ENCODE measurements at regions of chr2 and their contacts with region 1.

Region 1: DNA sequence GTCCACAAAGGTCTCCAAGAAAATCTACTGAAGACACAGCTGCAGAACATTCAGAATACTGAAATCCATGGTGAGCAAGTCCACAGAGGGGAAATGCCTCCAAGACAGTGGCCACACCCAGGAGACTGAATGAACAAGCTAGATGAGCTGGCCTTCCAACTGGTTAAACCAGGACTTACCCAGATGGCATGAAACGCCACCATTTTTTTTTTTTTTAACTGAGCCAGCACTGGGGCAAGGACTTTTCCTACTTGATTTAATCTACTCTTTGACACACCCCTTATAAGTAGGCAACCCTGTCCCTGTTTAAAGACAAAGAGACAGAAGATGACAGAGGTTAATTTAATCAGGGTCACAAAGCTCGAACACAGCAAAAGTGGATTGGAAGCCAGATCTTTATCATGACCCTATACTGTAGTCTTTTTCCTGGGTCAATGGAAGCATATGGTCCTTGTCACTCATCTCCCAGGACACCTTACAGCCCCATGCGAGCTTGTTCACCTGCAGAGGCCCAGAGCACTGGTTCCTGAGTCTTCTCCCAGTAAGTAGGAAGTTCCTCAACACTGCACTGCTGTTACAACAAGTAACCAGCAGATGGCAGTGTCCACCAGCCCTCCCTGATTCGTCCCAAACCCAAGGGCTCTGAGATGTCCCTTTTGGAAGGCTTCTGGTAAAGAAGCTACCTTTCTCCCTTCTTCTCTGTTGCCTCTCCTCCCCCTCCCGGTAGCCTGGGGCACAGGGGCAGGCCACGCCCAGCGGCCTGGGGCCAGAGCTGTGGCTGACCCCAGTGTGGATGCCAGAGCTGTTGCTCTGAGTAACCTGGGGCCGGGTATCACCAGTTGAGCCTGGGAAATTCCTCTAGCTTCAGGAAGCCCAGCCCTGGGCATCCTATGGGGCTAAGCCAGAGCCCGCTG is 5.6 kb upstream of the GDF7 start:
- DNase-seq: peak; percentile 78
- H3K4me3 Mint-ChIP-seq: no peak overlapping the region
- H3K27ac Mint-ChIP-seq: no peak overlapping the region
- H3K4me1 Mint-ChIP-seq: peaks cover 10% of the 10 kb centered on the region
- H3K27me3 Mint-ChIP-seq: peaks cover 52% of the 10 kb centered on the region

Region 2: DNA sequence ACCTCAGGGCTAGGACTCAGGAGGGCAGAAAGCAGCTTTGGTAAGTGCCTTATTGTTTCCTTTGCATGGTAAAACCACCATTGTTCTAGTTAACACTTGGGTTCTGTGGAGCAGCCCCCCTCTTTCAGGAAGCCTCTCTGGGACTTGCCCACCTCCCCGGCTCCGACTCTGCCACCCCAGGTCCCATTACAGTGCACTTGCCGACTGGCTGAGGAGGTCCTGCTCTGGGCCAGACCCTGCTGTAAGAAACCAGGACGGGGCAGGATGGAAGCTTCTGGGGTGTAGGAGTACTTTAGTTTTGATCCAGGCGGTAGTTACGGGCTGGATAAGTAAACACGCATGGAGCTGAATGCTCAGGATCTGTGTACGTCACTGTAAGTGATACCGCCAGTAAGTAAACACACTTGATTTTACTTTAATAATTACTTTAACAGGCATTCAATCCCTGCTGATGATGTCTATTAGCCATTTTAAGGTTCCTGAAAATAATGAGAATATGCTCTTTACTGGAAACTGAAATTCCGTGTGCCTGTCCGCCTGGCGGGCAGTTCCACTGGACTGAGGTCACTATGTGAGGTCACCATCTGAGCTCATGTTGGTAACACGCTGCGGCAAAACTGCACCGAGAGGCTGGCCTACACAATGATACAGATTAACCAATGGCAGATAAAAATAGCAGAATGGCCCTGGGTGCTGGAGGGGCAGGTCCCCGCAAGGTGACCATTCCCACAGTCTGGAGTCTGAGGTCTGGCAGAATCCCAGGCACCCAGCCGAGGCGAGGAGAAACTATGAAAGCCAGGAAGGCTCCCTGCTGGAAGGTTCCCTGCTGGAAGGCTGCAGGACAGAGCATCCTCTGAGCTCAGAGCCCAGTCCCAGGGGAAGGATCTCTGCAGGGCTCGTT is 35.6 kb before region 1 on chr2:
- CTCF ChIA-PET with region 1: no interaction called
- POLR2A ChIA-PET with region 1: no interaction called
- intact Hi-C with region 1: no loop called
- DNase-seq: no peak
- H3K4me3 Mint-ChIP-seq: no peak overlapping the region
- H3K27ac Mint-ChIP-seq: no peak overlapping the region
- H3K4me1 Mint-ChIP-seq: no peaks in the 10 kb centered on the region
- H3K27me3 Mint-ChIP-seq: no peaks in the 10 kb centered on the region

Region 3: DNA sequence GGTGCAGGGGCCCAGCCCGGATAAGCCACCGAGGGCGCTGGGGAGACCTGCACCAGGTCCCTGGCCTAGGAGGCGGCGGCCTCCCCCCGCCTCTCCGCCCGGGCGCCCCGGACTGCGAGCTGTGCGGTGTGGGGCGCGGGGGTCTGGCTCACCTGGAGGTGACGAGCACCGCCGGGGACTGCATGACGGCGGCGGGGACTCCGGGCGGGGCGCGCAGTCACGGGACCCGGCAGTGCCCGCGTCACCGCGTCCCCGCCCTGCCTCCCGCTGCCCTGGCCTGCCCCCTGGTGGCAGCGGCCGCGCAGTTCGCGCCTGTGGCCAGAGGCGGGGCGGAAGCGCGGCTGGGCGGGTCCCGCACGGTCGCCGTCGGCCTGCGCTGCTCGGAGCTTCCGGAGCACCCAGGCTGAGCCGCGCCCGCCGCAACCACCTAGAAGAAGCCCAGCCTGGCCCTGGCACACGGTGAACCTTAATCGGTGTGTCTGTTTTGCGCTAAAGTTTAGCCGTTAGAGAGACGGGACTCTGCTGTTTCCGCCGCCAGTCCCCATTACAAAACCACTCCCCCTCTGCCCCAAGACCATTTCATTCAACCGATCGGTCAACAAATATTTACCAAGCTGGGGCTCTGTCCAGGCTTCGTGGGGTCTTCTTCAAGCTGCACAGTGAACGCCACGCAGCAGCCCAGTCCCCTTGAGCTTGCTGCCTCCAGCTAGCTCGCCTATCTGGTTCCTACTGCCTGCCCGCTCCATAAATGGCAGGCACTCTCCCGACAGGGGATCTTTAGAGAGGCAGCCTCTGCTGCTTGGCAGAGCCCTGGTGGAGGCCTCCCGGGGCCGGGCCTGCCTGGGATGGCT is 10.2 kb before region 1 on chr2 and contains the start of gene HS1BP3:
- CTCF ChIA-PET with region 1: interaction called, 58 read pairs
- POLR2A ChIA-PET with region 1: no interaction called
- intact Hi-C with region 1: no loop called
- DNase-seq: peak; percentile 89
- H3K4me3 Mint-ChIP-seq: peak within 1 kb of the TSS; percentile 83
- H3K27ac Mint-ChIP-seq: peak within 1 kb of the TSS; percentile 79
- H3K4me1 Mint-ChIP-seq: peaks cover 24% of the 10 kb centered on the region
- H3K27me3 Mint-ChIP-seq: no peaks in the 10 kb centered on the region
- total RNA-seq, gene HS1BP3: 10.1 to 10.4 TPM

Region 4: DNA sequence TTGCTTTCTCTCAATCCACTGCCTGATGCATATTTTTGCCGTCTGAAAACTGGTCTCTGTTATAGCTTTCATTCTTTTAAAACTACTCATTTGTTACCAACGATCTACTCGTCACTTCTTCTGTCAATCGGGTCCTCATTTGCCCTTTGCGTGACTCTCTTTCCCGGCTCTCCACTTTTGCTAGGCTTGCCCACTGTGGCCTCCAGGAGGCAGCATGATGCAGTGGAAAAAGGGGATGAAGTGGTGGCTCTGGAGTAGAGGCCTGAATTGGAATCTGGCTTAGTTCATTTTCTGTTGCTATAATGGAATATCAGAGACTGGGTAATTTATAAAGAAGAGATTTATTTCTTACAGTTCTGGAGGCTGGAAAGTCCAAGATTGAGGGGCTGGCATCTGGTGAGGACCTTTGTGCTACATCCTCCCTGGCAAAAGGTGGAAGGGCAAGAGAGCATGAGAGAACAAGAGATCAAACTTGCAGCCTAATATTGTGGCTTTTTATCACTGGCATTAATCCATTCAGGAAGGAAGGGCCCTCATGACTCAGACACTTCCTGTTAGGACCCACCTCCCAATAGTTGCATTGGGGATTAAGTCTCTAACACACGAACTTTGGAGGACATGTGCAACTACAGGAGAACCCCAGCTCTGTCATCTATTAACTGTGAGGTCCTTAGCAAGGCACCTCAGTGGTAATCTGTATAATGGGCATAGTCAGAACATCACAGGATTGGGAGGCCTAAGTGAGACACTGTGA is 21.0 kb after region 1 on chr2:
- CTCF ChIA-PET with region 1: interaction called, 47 read pairs
- POLR2A ChIA-PET with region 1: no interaction called
- intact Hi-C with region 1: no loop called
- DNase-seq: no peak
- H3K4me3 Mint-ChIP-seq: no peak overlapping the region
- H3K27ac Mint-ChIP-seq: no peak overlapping the region
- H3K4me1 Mint-ChIP-seq: peaks cover 11% of the 10 kb centered on the region
- H3K27me3 Mint-ChIP-seq: no peaks in the 10 kb centered on the region

Region 5: GRCh38 chr2:20781656-20782265 is 120.4 kb after region 1 on chr2:
- CTCF ChIA-PET with region 1: interaction called, 18 read pairs
- POLR2A ChIA-PET with region 1: no interaction called
- intact Hi-C with region 1: no loop called
- DNase-seq: peak; percentile 20
- H3K4me3 Mint-ChIP-seq: no peak overlapping the region
- H3K27ac Mint-ChIP-seq: no peak overlapping the region
- H3K4me1 Mint-ChIP-seq: no peaks in the 10 kb centered on the region
- H3K27me3 Mint-ChIP-seq: no peaks in the 10 kb centered on the region

Region 6: GRCh38 chr2:20916604-20917286 is 255.4 kb after region 1 on chr2:
- CTCF ChIA-PET with region 1: interaction called, 7 read pairs
- POLR2A ChIA-PET with region 1: no interaction called
- intact Hi-C with region 1: loop called (anchors 5 kb)
- DNase-seq: no peak
- H3K4me3 Mint-ChIP-seq: no peak overlapping the region
- H3K27ac Mint-ChIP-seq: no peak overlapping the region
- H3K4me1 Mint-ChIP-seq: no peaks in the 10 kb centered on the region
- H3K27me3 Mint-ChIP-seq: peaks cover 28% of the 10 kb centered on the region

Region 7: GRCh38 chr2:21042958-21043743 is 381.8 kb after region 1 on chr2:
- CTCF ChIA-PET with region 1: interaction called, 3 read pairs
- POLR2A ChIA-PET with region 1: no interaction called
- intact Hi-C with region 1: loop called (anchors 5 kb)
- DNase-seq: peak; percentile 69
- H3K4me3 Mint-ChIP-seq: no peak overlapping the region
- H3K27ac Mint-ChIP-seq: no peak overlapping the region
- H3K4me1 Mint-ChIP-seq: peaks cover 3% of the 10 kb centered on the region
- H3K27me3 Mint-ChIP-seq: peaks cover 27% of the 10 kb centered on the region

Region 8: DNA sequence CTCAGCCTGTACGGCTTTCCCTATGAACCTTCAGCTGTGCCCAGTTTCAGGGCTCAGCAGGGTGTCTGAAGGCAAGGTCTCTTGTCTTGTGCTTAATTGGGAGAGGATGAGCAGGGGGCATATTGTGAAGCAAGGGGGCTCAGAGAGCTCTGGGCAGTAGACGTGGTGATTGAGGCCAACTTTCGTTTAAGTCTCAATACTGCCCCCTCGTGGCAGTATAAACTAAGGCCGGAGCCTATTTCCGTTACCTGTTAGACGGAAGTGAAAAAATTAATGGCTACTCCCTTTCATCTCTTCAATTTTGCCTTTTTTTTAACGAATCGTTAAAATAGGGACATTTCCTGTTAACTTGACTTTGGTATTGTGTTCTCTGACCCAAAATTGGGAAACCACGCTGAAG is 655.8 kb after region 1 on chr2:
- CTCF ChIA-PET with region 1: interaction called, 11 read pairs
- POLR2A ChIA-PET with region 1: no interaction called
- intact Hi-C with region 1: loop called (anchors 5 kb)
- DNase-seq: peak; percentile 38
- H3K4me3 Mint-ChIP-seq: no peak overlapping the region
- H3K27ac Mint-ChIP-seq: no peak overlapping the region
- H3K4me1 Mint-ChIP-seq: no peaks in the 10 kb centered on the region
- H3K27me3 Mint-ChIP-seq: no peaks in the 10 kb centered on the region